HCT116 (cell line): ENCODE measurements at regions of chr6 and their contacts with region 1.

Region 1: DNA sequence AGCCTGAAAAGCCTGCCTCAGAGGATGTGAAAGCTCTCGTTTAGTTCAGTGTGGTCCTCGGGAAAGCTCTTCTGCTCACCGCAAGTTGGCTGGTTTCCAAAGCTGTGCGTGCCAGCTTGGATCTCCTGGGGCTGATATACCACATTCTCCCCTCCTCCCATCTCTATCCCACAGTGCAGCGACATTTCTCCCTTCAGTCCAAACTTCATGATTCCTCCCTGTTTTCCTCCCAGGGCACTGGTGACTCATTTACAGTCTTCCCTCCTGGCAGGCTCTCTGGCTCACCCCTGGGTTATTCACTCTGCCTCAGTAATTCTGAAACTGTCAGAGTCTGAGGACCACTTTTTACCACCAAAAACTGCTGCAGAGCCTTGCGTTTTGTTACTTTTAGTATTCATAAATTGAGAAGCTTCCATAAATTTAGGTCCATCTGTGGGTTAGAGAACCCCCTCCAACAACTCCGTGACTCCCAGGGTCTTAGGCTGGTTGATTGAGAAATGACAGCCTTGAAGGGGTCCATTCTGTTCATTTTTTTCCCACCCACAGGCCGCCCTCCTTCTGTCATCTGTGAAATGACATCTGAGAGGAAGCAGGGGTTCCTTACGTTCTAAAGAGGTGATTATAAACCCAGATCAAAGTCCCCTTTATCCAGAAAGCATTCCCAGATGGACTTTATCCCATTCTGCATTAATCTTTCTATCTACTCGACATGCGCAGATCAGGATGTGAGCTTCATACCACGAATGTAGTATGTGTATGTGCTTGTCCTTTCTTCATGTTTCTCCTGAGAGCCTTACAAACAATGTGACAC is 6.1 kb downstream of the TRIM10 start:
- DNase-seq: no peak
- ATAC-seq: peak; percentile 76
- H3K4me3 ChIP-seq: peak overlapping the region in 1 of 2 experiments; percentile 35; a peak in 2 of 4 replicates
- H3K27ac ChIP-seq: 0 out of 2 replicates have a peak overlapping the region, but pooled peaks have one; percentile 3
- H3K4me1 ChIP-seq: peaks cover 28 to 31% of the 10 kb centered on the region in 2 experiments
- H3K27me3 ChIP-seq: no peaks in the 10 kb centered on the region
- CTCF ChIP-seq: no peak; a peak in 1 of 6 replicates
- POLR2A ChIP-seq: no peak
- RAD21 ChIP-seq: no peak

Region 2: GRCh38 chr6:28252009-28252975 is 1902.6 kb before region 1 on chr6 and contains the start of gene ZKSCAN4:
- CTCF ChIA-PET with region 1: no interaction called
- POLR2A ChIA-PET with region 1: no interaction called
- RAD21 ChIA-PET with region 1: no interaction called
- intact Hi-C with region 1: no loop called
- DNase-seq: peak; percentile 90
- ATAC-seq: peak; percentile 95
- H3K4me3 ChIP-seq: peak within 1 kb of the TSS; percentile 97 to 98
- H3K27ac ChIP-seq: peak within 1 kb of the TSS; percentile 44
- H3K4me1 ChIP-seq: peaks cover 7 to 15% of the 10 kb centered on the region in 2 experiments; a peak in 3 of 4 replicates
- H3K27me3 ChIP-seq: no peaks in the 10 kb centered on the region
- CTCF ChIP-seq: no peak
- POLR2A ChIP-seq: peak; percentile 17
- RAD21 ChIP-seq: peak; percentile 17; the same call in 1 of the 2 replicates
- total RNA-seq, gene ZKSCAN4: 4.8 TPM

Region 3: DNA sequence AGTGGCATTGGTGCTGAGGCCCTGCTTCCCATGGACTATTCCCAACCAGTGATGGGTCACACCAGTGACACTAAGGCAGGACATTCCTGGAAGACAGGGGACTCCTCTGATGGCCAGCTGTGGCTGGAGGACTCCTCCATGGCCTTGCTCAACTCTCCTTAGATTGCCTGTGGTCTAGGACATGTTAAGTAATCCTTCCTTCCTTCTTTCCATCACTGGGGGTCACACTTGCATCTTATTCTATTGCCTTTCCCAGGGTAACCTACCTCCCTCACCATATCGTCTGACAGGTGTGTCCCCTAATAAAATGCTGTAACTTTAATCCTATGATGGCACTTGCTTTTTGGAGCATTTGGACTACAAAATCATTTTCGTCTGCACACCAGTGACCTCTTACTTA is 237.1 kb before region 1 on chr6:
- CTCF ChIA-PET with region 1: no interaction called
- POLR2A ChIA-PET with region 1: no interaction called
- RAD21 ChIA-PET with region 1: no interaction called
- intact Hi-C with region 1: no loop called
- DNase-seq: no peak
- ATAC-seq: no peak
- H3K4me3 ChIP-seq: no peak overlapping the region
- H3K27ac ChIP-seq: no peak overlapping the region
- H3K4me1 ChIP-seq: no peaks in the 10 kb centered on the region
- H3K27me3 ChIP-seq: no peaks in the 10 kb centered on the region
- CTCF ChIP-seq: no peak
- POLR2A ChIP-seq: no peak
- RAD21 ChIP-seq: peak; percentile 23; the same call in 1 of the 2 replicates

Region 4: GRCh38 chr6:30130887-30131862 is 23.7 kb before region 1 on chr6:
- CTCF ChIA-PET with region 1: interaction called, 11 read pairs
- POLR2A ChIA-PET with region 1: no interaction called
- RAD21 ChIA-PET with region 1: no interaction called
- intact Hi-C with region 1: no loop called
- DNase-seq: peak; percentile 76
- ATAC-seq: peak; percentile 98
- H3K4me3 ChIP-seq: peak overlapping the region in 1 of 2 experiments; percentile 17; a peak in 1 of 4 replicates
- H3K27ac ChIP-seq: no peak overlapping the region
- H3K4me1 ChIP-seq: peaks cover 8 to 22% of the 10 kb centered on the region in 2 experiments; a peak in 3 of 4 replicates
- H3K27me3 ChIP-seq: no peaks in the 10 kb centered on the region
- CTCF ChIP-seq: peak; percentile 99 to 100 (median 100)
- POLR2A ChIP-seq: no peak
- RAD21 ChIP-seq: peak; percentile 91

Region 5: DNA sequence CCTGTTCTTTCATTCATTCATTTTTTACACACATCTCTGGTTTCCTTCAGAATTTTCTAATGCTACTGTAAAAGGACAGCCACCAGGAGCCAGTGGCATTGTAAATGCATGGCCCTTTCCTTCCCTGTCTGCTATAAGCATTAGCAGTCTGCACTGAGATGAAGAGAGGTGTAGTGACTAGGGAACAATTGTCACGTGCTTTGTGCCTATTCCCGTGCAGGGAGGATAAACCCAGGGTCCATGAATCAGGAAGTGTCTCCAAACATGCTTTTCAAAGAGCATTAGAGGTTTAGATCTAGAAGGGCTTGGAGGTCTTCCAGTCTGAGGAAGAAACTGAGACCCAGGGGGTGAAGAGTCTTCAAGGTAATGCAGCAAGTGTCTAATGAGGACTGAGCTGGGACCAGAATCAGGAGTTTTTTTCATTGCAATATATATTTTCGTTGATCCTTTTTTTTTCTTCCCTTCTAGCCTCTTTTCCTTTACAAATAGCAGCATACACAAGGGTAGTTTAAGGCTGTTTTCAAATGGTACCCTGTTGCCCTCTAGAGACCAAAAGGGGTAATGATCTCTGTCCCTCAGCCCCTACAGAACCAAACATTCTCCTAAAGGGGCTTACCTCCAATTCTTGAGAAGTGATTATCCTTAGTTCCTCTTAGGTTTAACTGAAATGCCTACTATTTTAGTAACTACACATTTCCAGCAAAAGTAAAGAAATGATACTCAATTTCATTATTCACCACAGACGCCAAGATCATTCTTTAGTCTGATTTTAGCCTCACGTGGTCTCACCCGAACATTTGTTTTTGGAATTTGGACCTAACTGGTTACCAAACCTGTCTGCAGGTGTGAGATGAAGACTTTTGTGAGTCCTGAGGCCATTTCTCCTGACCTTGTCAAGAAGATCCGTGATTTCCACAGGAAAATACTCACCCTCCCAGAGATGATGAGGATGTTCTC is 15.0 kb after region 1 on chr6:
- CTCF ChIA-PET with region 1: no interaction called
- POLR2A ChIA-PET with region 1: no interaction called
- RAD21 ChIA-PET with region 1: no interaction called
- intact Hi-C with region 1: no loop called
- DNase-seq: peak; percentile 51
- ATAC-seq: peak; percentile 99
- H3K4me3 ChIP-seq: no peak overlapping the region
- H3K27ac ChIP-seq: no peak overlapping the region
- H3K4me1 ChIP-seq: no peaks in the 10 kb centered on the region
- H3K27me3 ChIP-seq: no peaks in the 10 kb centered on the region
- CTCF ChIP-seq: peak; percentile 83 to 89 (median 88)
- POLR2A ChIP-seq: no peak
- RAD21 ChIP-seq: peak; percentile 93